CD8-positive, alpha-beta T cell (primary cell): ENCODE measurements at regions of chr19 and their contacts with region 1.

Region 1: DNA sequence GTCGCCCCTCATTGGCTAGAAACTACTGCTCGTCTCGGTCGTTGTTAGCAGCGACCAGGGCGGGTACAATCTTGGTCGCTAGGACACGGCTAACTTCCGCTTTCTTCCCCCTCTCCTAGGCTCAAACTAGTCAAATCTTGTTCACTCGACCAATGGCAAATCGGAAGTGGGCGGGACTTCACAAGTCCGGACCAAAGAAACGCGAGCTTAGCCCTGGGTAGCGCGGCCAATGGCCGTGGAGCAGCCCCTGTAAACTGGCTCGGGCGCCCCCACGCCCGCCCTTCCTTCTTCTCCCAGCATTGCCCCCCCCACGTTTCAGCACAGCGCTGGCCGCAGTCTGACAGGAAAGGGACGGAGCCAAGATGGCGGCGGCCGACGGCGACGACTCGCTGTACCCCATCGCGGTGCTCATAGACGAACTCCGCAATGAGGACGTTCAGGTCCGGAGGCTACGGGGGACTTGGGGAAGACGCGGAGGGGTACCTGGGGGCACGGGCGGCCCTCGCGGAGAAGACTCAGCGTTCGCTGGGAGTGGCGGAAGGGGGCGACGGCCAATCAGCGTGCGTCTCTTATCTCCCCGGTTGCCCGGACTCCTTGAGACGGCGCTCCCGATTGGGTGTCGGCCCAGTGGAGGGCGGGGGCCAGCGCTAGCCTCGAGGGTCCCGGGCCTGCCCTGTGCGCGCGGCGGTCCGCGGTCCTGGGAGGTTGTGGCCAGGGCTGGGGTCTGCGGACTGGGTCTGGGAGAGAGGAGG is at the start of gene PPP2R1A:
- DNase-seq: peak; percentile 96 to 100 (median 98)
- ATAC-seq: peak; percentile 80
- H3K4me3 ChIP-seq: peak within 1 kb of the TSS; percentile 88 to 94
- H3K4me3 Mint-ChIP-seq: peak within 1 kb of the TSS; percentile 98
- H3K27ac ChIP-seq: peak within 1 kb of the TSS; percentile 97 to 98
- H3K27ac Mint-ChIP-seq: peak within 1 kb of the TSS; percentile 100
- H3K4me1 ChIP-seq: peaks cover 44% of the 10 kb centered on the region
- H3K4me1 Mint-ChIP-seq: peaks cover 48% of the 10 kb centered on the region
- H3K27me3 ChIP-seq: no peaks in the 10 kb centered on the region
- H3K27me3 Mint-ChIP-seq: no peaks in the 10 kb centered on the region
- CTCF ChIP-seq: no peak
- total RNA-seq, gene PPP2R1A: 186 to 188 TPM

Region 2: DNA sequence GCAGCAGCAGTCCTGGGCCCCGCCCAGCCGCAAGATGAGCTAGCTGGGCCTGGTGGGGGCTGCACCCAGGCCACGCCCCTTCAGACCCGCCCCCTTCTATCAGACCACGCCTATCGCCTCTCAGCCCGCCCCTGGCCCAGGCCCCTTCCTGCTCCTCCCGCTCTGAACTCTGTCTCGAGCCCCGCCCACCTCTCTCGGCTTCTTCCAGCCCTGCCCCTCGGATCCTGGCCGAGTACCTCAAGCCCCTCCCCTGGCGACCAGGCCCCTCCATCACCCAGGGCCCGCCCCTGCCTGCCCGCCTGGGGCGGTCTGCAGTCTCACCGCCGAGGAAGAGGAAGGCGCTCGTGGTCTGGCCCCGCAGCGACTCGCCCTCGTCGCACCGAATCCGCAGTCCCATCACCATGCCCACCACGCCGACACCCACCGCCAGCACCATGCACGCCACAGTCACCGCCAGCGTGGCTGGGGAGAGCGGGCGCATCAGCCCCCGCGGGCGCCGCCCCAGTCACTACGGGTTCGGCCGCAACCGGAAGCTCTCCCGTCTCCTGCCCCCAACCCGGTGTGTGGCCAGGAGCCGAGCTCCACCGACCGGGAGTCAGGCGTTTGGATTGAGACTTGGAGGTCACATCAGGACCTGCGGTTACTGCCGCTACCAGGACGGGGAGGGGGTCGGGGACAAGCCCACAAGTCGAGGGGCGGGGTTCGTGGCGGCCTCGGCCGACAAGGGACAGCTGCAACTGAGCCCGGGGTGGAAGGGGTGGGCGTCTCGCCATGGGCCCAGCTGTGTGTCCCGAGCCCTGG is 822.1 kb before region 1 on chr19:
- CTCF ChIA-PET with region 1: no interaction called
- POLR2A ChIA-PET with region 1: no interaction called
- intact Hi-C with region 1: loop called in 1 of 2 experiments (anchors 5 kb)
- DNase-seq: peak; percentile 88 to 98 (median 95)
- ATAC-seq: peak; percentile 78
- H3K4me3 ChIP-seq: peak overlapping the region; percentile 74 to 77
- H3K4me3 Mint-ChIP-seq: peak overlapping the region; percentile 98
- H3K27ac ChIP-seq: peak overlapping the region; percentile 48 to 87
- H3K27ac Mint-ChIP-seq: peak overlapping the region; percentile 96
- H3K4me1 ChIP-seq: peaks cover 61% of the 10 kb centered on the region
- H3K4me1 Mint-ChIP-seq: peaks cover 72% of the 10 kb centered on the region
- H3K27me3 ChIP-seq: no peaks in the 10 kb centered on the region
- H3K27me3 Mint-ChIP-seq: no peaks in the 10 kb centered on the region
- CTCF ChIP-seq: no peak

Region 3: GRCh38 chr19:52007806-52008557 is 181.9 kb before region 1 on chr19 and contains the start of gene ZNF615:
- CTCF ChIA-PET with region 1: no interaction called
- POLR2A ChIA-PET with region 1: no interaction called
- intact Hi-C with region 1: loop called in 1 of 2 experiments (anchors 1 kb)
- DNase-seq: peak; percentile 76 to 95 (median 89)
- ATAC-seq: peak; percentile 92
- H3K4me3 ChIP-seq: peak within 1 kb of the TSS; percentile 81 to 97
- H3K4me3 Mint-ChIP-seq: peak within 1 kb of the TSS; percentile 98
- H3K27ac ChIP-seq: peak within 1 kb of the TSS; percentile 78 to 89
- H3K27ac Mint-ChIP-seq: peak within 1 kb of the TSS; percentile 95
- H3K4me1 ChIP-seq: peaks cover 4% of the 10 kb centered on the region
- H3K4me1 Mint-ChIP-seq: peaks cover 21% of the 10 kb centered on the region
- H3K27me3 ChIP-seq: no peaks in the 10 kb centered on the region
- H3K27me3 Mint-ChIP-seq: no peaks in the 10 kb centered on the region
- CTCF ChIP-seq: no peak
- total RNA-seq, gene ZNF615: 14.7 to 17.2 TPM

Region 4: DNA sequence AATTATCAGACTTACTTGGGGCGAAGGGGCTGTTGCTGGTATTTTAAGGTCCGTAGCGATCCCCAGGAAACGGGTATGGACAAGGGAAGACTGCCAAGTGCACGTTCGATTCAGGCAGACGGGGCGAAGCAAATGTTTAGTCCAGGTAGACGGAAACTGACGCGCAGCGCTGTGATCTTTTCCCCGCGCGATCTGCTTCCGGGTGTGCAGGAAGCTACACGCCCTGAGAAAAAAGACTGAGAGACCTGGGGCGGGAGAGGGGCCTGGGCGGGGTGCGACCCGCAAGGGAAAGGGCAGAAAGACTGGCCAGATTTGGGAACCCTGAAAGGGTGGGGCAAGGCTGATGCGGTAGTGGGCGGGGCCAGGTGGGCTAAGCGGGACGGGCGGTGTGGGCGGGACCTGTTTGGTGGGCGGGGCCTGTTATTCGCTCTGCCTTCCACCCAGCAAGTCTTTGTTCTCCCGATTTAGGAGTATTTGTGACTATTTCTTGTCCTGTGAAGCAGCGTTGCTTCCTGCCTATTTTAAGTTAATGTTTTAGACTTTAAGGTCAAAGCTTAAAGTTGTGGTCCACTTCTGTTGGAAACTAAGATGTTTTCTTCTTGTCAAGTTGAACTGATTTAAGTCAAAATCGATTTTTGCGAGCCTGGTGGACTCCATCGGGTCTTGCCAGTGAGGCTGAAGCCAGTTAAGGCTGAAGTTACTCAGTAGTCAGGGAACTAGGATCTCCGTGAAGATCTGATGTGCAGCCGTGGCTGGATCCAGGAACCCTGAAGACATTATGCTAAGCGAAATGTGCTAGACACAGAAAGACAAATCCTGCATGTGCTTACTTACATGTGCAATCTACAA is 18.4 kb before region 1 on chr19 and contains the start of gene ZNF836:
- CTCF ChIA-PET with region 1: no interaction called
- POLR2A ChIA-PET with region 1: interaction called, 28 read pairs
- intact Hi-C with region 1: loop called (anchors 1 kb)
- DNase-seq: peak; percentile 79 to 95 (median 92)
- ATAC-seq: peak; percentile 92
- H3K4me3 ChIP-seq: peak within 1 kb of the TSS; percentile 83 to 96
- H3K4me3 Mint-ChIP-seq: peak within 1 kb of the TSS; percentile 94
- H3K27ac ChIP-seq: peak within 1 kb of the TSS; percentile 72 to 96
- H3K27ac Mint-ChIP-seq: peak within 1 kb of the TSS; percentile 95
- H3K4me1 ChIP-seq: peaks cover 24% of the 10 kb centered on the region
- H3K4me1 Mint-ChIP-seq: peaks cover 41% of the 10 kb centered on the region
- H3K27me3 ChIP-seq: no peaks in the 10 kb centered on the region
- H3K27me3 Mint-ChIP-seq: no peaks in the 10 kb centered on the region
- CTCF ChIP-seq: no peak
- total RNA-seq, gene ZNF836: 17.6 to 22.1 TPM

Region 5: DNA sequence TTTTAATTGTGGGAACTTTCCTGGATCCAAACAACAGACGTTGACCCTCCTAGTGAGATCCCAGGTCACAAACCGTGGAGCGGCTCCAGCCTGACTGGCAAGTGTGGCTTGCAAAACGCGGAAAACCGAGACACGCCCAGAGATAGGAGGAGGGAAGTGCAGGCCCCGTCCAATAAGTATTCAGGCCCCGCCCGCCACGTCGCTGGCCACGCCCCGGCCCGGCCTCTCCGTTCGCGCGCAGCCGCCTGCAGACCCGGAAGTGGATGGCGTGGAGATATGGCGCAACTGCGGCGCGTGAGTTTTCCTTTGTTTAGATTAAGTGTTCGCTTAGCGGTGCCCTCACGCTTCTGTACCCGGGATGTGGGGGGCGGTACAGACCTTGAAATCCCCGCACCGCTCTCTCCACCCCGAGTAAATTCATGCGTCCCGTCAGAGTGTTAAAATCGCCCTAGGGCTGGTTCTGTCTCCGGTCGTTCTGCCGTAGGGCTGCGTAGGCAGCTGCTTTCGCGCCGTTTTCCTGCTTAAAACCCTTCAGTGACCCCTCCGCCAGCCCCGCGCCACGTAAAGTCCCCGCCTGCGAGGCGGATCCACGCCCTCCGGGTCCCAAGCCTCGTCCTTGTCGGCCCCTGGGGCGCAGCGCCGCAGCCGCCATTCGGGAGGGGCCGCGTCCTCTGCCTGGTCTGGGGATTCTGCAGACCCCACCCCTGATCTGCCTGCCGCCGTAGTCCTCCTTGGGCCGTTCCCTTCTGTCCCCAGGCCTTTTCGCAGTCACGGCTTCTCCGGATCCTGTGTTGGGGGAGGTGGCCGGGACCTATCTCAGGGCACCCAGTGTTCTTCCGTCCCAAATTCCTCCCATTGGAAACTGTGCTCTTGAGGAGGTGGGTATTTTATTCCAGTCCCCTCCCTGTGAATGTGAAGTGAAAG is 79.7 kb after region 1 on chr19 and contains the start of gene ZNF766:
- CTCF ChIA-PET with region 1: no interaction called
- POLR2A ChIA-PET with region 1: interaction called, 4 read pairs
- intact Hi-C with region 1: loop called (anchors 1 kb)
- DNase-seq: peak; percentile 95 to 98 (median 97)
- ATAC-seq: peak; percentile 98
- H3K4me3 ChIP-seq: peak within 1 kb of the TSS; percentile 89 to 95
- H3K4me3 Mint-ChIP-seq: peak within 1 kb of the TSS; percentile 98
- H3K27ac ChIP-seq: peak within 1 kb of the TSS; percentile 96
- H3K27ac Mint-ChIP-seq: peak within 1 kb of the TSS; percentile 98
- H3K4me1 ChIP-seq: peaks cover 13% of the 10 kb centered on the region
- H3K4me1 Mint-ChIP-seq: peaks cover 41% of the 10 kb centered on the region
- H3K27me3 ChIP-seq: no peaks in the 10 kb centered on the region
- H3K27me3 Mint-ChIP-seq: no peaks in the 10 kb centered on the region
- CTCF ChIP-seq: no peak
- total RNA-seq, gene ZNF766: 50.8 to 52.6 TPM

Region 6: GRCh38 chr19:52637718-52638585 is 448.0 kb after region 1 on chr19 and contains the start of gene ZNF83:
- CTCF ChIA-PET with region 1: no interaction called
- POLR2A ChIA-PET with region 1: interaction called, 4 read pairs
- intact Hi-C with region 1: loop called in 1 of 2 experiments (anchors 1 kb)
- DNase-seq: peak; percentile 85 to 96 (median 91)
- ATAC-seq: peak; percentile 95
- H3K4me3 ChIP-seq: peak within 1 kb of the TSS; percentile 68 to 97
- H3K4me3 Mint-ChIP-seq: peak within 1 kb of the TSS; percentile 95
- H3K27ac ChIP-seq: peak within 1 kb of the TSS; percentile 90 to 99
- H3K27ac Mint-ChIP-seq: peak within 1 kb of the TSS; percentile 98
- H3K4me1 ChIP-seq: peaks cover 14% of the 10 kb centered on the region
- H3K4me1 Mint-ChIP-seq: peaks cover 26% of the 10 kb centered on the region
- H3K27me3 ChIP-seq: no peaks in the 10 kb centered on the region
- H3K27me3 Mint-ChIP-seq: no peaks in the 10 kb centered on the region
- CTCF ChIP-seq: no peak
- total RNA-seq, gene ZNF83: 49.4 to 51.2 TPM

Region 7: DNA sequence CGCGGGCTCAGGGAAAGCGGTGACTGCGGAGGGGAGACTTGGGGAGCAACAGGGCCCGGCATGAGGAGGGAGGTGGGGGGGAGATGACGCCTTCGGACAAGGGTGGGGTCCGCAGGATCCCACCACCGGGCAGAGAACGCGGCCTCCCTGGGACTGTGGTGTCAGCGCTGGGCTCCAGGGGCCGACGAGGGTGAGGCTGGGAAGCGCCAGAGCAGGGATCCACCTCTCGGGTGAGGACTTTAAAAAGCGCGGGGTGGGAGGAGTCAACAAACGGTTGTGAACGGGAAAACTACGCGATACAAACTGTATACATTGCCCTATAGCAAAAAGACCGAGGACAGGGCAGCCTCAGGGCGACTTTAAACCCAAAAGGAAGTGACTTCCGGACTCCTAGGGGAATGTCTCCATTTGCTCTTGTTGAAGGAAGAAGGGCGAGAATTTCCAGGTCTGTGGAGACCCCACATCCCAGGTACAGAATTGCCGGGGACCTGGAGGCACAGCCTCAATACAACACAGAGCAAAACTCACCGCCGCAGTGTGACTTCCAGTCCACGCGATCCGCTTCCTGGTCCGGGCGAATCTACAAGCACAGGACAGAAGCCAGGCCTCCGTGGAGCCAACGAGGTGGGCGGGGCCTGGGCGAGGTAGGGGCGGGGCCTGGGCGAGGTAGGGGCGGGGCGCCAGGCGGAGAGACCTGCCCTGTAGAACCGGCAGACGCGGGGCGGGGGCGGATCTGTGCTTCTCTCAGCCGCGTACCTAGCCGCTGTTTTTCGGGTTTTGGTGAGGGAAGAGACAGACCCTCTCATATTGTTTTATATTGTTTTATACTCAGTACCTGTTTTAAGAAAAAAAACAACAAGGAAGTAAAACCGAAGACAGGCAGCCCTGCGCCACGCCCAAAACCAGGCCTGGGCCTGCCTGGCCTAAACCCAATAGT is 733.2 kb after region 1 on chr19 and contains the start of gene ZNF888:
- CTCF ChIA-PET with region 1: no interaction called
- POLR2A ChIA-PET with region 1: no interaction called
- intact Hi-C with region 1: loop called in 1 of 2 experiments (anchors 1 kb)
- DNase-seq: peak; percentile 74 to 90 (median 82)
- ATAC-seq: peak; percentile 100
- H3K4me3 ChIP-seq: peak within 1 kb of the TSS; percentile 93 to 97
- H3K4me3 Mint-ChIP-seq: peak within 1 kb of the TSS; percentile 94
- H3K27ac ChIP-seq: peak within 1 kb of the TSS; percentile 62 to 75
- H3K27ac Mint-ChIP-seq: peak within 1 kb of the TSS; percentile 90
- H3K4me1 ChIP-seq: peaks cover 14% of the 10 kb centered on the region
- H3K4me1 Mint-ChIP-seq: peaks cover 33% of the 10 kb centered on the region
- H3K27me3 ChIP-seq: no peaks in the 10 kb centered on the region
- H3K27me3 Mint-ChIP-seq: no peaks in the 10 kb centered on the region
- CTCF ChIP-seq: no peak
- total RNA-seq, gene ZNF888: 4.5 to 4.9 TPM